ENCODE measurements at regions of chr5 and their contacts with region 1.

Region 1: GRCh38 chr5:14727428-14727865 is 62.9 kb downstream of the OTULIN start:
- DNase-seq: peak; percentile 86
- H3K4me3 ChIP-seq: no peak overlapping the region
- H3K27ac ChIP-seq: no peak overlapping the region
- H3K4me1 ChIP-seq: peaks cover 0 to 18% (median 7%) of the 10 kb centered on the region in 4 donors
- H3K27me3 ChIP-seq: no peaks in the 10 kb centered on the region
- CTCF ChIP-seq: peak; percentile 62 to 94 (median 88)
- EP300 ChIP-seq: no peak
- POLR2A ChIP-seq: no peak

Region 2: GRCh38 chr5:15003511-15003920 is 276.1 kb after region 1 on chr5:
- intact Hi-C with region 1: loop called (anchors 1 kb)
- DNase-seq: peak; percentile 72
- H3K4me3 ChIP-seq: no peak overlapping the region
- H3K27ac ChIP-seq: no peak overlapping the region
- H3K4me1 ChIP-seq: peaks cover 0 to 17% (median 8%) of the 10 kb centered on the region in 4 donors
- H3K27me3 ChIP-seq: no peaks in the 10 kb centered on the region
- CTCF ChIP-seq: peak in 3 of 4 experiments; percentile 65 to 76 (median 68)
- EP300 ChIP-seq: no peak
- POLR2A ChIP-seq: no peak

Region 3: DNA sequence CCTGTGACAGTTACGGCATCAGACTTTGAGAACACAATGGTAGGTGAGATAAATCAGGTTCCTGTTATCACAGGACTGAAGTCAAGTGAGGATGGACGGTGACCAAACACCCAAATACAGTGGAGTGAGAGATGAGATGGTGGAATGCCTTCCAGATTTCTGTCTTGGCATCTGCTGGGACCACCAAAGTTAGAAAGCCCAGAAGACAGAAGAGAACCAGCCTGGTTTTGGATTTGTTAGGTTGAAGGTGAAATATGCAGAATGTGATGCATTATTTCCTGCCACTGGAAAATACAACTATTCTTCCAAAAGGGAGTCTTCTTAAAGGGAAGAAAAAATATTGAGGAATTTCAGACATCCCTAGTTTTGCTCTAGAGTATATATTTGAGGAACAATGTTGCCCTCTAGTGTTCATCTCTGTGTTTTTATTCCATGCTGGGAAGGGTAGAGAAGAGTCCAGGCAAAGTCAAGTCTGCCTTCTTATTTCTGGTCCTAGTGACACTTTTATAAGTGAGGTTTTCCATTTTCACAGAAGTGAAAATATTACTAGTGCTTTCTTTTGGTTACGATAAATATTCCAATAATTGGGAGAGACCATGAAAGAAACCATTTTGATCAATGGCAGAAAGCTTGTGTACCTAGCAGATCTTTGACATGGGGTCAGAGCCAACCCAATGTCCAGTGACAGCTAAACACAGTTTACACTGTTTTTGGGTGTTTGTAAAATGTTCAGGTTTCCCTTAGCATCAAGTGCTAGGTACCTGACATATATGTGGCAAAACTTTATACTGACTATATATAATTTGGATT is 286.4 kb after region 1 on chr5:
- intact Hi-C with region 1: loop called (anchors 2 kb)
- DNase-seq: no peak
- H3K4me3 ChIP-seq: no peak overlapping the region
- H3K27ac ChIP-seq: peak overlapping the region in 1 of 4 donors; percentile 23
- H3K4me1 ChIP-seq: peaks cover 0 to 15% (median 11%) of the 10 kb centered on the region in 4 donors
- H3K27me3 ChIP-seq: no peaks in the 10 kb centered on the region
- CTCF ChIP-seq: peak; percentile 32 to 70 (median 54)
- EP300 ChIP-seq: no peak
- POLR2A ChIP-seq: no peak

Region 4: GRCh38 chr5:15142458-15142857 is 415.0 kb after region 1 on chr5:
- intact Hi-C with region 1: no loop called
- DNase-seq: no peak
- H3K4me3 ChIP-seq: no peak overlapping the region
- H3K27ac ChIP-seq: no peak overlapping the region
- H3K4me1 ChIP-seq: peaks cover 0 to under 1% (median 0%) of the 10 kb centered on the region in 4 donors
- H3K27me3 ChIP-seq: no peaks in the 10 kb centered on the region
- CTCF ChIP-seq: no peak
- EP300 ChIP-seq: no peak
- POLR2A ChIP-seq: no peak

Measured in sigmoid colon (tissue), 7 donors.